ENCODE measurements at regions of chr11 and their contacts with region 1.

Region 1: DNA sequence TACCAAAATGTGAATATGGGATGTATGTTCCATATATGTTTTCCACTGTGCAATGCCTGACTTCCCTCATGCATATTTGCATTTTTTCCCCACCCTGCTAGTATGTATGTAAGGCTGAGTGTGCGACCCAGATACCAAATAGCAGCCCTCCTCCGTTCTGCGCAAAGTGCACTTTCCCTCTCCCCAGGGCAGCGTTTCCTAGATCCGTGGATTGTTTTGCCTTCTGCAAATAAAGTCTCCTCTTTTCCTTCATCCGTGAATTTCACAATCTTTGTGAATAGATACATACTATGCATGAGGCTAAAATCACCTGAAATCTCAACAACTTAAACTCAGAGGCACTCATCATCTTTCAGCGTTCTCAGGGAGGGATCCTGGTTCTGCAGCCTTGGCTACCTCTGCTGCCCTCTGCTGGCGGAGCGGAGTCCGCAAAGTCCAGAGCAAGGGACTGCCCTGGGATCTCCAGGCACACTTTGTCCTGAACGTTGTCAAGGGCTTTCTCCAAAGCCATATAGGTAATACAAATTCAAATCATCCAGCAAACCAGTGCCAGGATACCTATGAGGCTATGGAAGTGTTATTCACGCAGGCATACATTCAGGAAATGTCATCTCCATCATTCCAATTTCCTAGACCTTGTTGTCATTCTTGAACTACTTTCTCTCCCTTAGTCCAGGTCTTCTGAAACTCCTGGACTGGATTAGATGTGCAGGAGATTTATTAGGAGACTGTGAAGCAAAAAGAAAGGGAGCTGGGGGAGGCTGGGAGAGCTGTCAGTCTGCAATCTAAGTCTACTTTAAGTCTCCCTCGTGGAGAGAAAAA is 53.1 kb downstream of the CNTF start:
- DNase-seq: peak; percentile 82
- H3K4me3 Mint-ChIP-seq: no peak overlapping the region
- H3K27ac Mint-ChIP-seq: no peak overlapping the region
- H3K4me1 Mint-ChIP-seq: no peaks in the 10 kb centered on the region
- H3K27me3 Mint-ChIP-seq: peaks cover 4% of the 10 kb centered on the region

Region 2: DNA sequence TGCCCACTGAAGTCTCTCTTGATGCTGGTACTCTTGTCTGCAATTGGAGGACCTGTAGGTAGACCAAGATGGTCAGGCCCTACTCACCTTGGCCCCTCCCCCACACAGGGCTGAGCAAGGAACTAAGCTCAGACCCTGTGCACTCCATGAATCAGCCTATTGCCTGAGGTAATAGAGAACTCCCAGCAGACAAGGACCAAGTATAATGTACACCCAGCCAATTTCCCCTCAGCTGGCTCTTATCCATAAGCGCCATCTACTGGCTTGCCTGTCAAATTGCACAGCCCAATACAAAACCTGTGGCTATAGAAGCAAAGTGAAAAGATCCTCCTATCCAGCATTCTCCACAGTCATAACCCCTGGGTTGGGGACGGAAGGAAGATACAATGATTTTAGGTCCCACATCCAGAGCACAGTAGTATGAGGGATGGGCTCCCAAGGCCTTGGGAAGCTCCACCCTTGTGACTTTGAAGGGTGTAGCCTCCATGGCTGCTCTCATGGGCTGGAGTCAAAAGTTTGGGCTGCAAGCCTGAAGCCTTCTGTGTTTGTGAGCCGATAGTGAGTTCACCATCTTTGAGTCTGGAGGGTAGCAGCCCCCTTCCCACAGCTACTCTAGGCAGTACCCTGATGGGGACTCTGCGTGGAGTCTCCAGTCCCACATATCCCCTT is 112.9 kb after region 1 on chr11:
- CTCF ChIA-PET with region 1: interaction called, 5 read pairs
- POLR2A ChIA-PET with region 1: no interaction called
- intact Hi-C with region 1: loop called (anchors 1 kb)
- DNase-seq: peak; percentile 56
- H3K4me3 Mint-ChIP-seq: no peak overlapping the region
- H3K27ac Mint-ChIP-seq: no peak overlapping the region
- H3K4me1 Mint-ChIP-seq: no peaks in the 10 kb centered on the region
- H3K27me3 Mint-ChIP-seq: peaks cover 3% of the 10 kb centered on the region